GM12878 (cell line): ENCODE measurements at regions of chr15 and their contacts with region 1.

Region 1: DNA sequence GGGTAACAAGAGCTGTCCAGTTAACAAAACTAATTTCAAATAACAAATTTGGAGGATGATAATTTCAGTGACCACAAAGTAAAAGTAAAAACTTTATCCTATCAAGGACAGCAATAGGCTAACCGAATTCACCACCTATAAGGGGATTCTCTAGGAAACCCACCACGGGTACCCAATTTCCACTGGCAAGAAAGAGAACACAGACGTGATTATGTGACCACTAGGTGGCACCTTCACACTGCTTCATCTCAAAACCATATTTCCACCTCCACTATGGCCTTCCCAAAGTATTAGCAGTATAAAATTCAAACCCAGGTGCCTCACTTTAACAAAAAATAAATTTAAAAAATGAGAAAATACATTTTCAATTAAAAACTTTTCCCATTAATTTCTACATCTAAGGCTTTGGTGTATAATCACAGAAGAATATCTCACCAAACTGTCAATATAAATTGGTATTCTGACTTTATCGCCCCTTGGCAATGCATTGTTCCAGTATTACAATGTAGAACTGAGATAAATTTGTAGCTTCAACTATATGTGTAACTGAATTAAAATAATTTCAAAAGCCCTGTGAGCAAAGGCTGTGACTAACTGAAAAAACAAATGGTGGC is 96.5 kb downstream of the FSIP1 start:
- DNase-seq: no peak
- ATAC-seq: peak; percentile 84
- H3K4me3 ChIP-seq: no peak overlapping the region
- H3K27ac ChIP-seq: no peak overlapping the region
- H3K4me1 ChIP-seq: no peaks in the 10 kb centered on the region
- H3K27me3 ChIP-seq: no peaks in the 10 kb centered on the region; a peak in 1 of 4 replicates
- CTCF ChIP-seq: peak; percentile 61 to 78 (median 65)
- EP300 ChIP-seq: no peak
- POLR2A ChIP-seq: no peak
- RAD21 ChIP-seq: peak; percentile 79

Region 2: GRCh38 chr15:39594056-39594763 is 91.9 kb before region 1 on chr15:
- CTCF ChIA-PET with region 1: interaction called, 19 read pairs
- POLR2A ChIA-PET with region 1: no interaction called
- RAD21 ChIA-PET with region 1: interaction called, 3 read pairs
- SMC1A ChIA-PET with region 1: no interaction called
- in situ Hi-C with region 1: no loop called
- intact Hi-C with region 1: no loop called
- DNase-seq: no peak
- ATAC-seq: peak; percentile 56
- H3K4me3 ChIP-seq: no peak overlapping the region
- H3K27ac ChIP-seq: no peak overlapping the region
- H3K4me1 ChIP-seq: no peaks in the 10 kb centered on the region
- H3K27me3 ChIP-seq: no peaks in the 10 kb centered on the region
- CTCF ChIP-seq: peak in 2 of 3 experiments; percentile 23 to 41; a peak in 2 of 6 replicates
- EP300 ChIP-seq: no peak
- POLR2A ChIP-seq: no peak
- RAD21 ChIP-seq: peak; percentile 21; the same call in 1 of the 2 replicates

Region 3: GRCh38 chr15:39624806-39625205 is 61.3 kb before region 1 on chr15:
- CTCF ChIA-PET with region 1: interaction called, 14 read pairs
- POLR2A ChIA-PET with region 1: no interaction called
- RAD21 ChIA-PET with region 1: interaction called, 3 read pairs
- SMC1A ChIA-PET with region 1: interaction called, 4 read pairs
- in situ Hi-C with region 1: no loop called
- intact Hi-C with region 1: no loop called
- DNase-seq: peak; percentile 45
- ATAC-seq: peak; percentile 75
- H3K4me3 ChIP-seq: no peak overlapping the region
- H3K27ac ChIP-seq: 0 out of 2 replicates have a peak overlapping the region, but pooled peaks have one; percentile 24
- H3K4me1 ChIP-seq: peaks cover 30% of the 10 kb centered on the region
- H3K27me3 ChIP-seq: no peaks in the 10 kb centered on the region
- CTCF ChIP-seq: no peak
- EP300 ChIP-seq: peak; percentile 35 to 75; a peak in 2 of 4 replicates
- POLR2A ChIP-seq: no peak
- RAD21 ChIP-seq: no peak

Region 4: DNA sequence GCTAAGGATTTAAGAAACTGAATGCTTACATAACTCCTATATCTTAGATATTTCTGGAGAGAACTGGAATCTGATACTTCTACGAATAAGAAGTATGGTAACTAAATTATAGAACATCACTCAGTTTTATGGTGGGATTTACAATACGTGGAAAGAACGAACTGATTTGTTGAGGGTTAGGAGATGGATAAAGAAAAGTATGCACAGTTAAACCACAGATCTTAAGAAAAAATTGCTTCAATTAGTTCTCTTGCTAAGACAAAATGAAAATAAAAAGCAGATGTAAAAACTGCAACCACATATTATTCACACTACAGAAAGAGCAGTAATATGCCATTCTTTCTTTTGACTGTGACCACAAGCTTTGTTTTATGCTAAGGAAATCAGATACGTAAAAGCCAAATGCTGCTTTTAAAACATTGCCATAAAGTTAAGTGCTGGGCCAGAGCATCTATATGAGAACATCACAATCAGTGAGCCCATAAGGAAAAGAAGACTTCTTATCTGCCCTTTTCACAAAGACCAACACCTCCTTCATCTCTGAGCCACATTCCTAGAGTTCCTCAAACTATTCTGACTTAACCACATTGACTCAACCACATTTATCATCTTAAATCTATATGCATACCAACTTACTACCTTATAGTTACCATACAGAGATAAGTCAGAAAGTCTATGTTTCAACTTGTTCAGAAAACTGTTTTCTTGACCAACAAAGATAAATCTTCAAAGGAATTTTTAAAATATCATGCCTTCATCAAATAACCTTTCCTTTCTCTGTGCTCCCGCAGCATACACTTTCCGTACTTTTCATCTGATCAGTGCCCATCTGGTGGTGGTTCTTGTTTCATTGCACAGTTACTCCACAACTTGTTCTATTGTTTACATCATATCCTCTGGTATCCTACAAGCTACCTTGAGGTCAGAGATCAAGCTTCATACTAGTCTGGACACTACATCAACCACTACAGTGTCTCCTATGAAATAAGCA is 34.8 kb after region 1 on chr15:
- CTCF ChIA-PET with region 1: interaction called, 14 read pairs
- POLR2A ChIA-PET with region 1: no interaction called
- RAD21 ChIA-PET with region 1: interaction called, 4 read pairs
- SMC1A ChIA-PET with region 1: interaction called, 5 read pairs
- in situ Hi-C with region 1: no loop called
- intact Hi-C with region 1: no loop called
- DNase-seq: no peak
- ATAC-seq: no peak
- H3K4me3 ChIP-seq: no peak overlapping the region
- H3K27ac ChIP-seq: no peak overlapping the region
- H3K4me1 ChIP-seq: no peaks in the 10 kb centered on the region
- H3K27me3 ChIP-seq: no peaks in the 10 kb centered on the region
- CTCF ChIP-seq: no peak
- EP300 ChIP-seq: no peak
- POLR2A ChIP-seq: no peak
- RAD21 ChIP-seq: no peak